ENCODE measurements at regions of chr2 and their contacts with region 1.

Region 1: DNA sequence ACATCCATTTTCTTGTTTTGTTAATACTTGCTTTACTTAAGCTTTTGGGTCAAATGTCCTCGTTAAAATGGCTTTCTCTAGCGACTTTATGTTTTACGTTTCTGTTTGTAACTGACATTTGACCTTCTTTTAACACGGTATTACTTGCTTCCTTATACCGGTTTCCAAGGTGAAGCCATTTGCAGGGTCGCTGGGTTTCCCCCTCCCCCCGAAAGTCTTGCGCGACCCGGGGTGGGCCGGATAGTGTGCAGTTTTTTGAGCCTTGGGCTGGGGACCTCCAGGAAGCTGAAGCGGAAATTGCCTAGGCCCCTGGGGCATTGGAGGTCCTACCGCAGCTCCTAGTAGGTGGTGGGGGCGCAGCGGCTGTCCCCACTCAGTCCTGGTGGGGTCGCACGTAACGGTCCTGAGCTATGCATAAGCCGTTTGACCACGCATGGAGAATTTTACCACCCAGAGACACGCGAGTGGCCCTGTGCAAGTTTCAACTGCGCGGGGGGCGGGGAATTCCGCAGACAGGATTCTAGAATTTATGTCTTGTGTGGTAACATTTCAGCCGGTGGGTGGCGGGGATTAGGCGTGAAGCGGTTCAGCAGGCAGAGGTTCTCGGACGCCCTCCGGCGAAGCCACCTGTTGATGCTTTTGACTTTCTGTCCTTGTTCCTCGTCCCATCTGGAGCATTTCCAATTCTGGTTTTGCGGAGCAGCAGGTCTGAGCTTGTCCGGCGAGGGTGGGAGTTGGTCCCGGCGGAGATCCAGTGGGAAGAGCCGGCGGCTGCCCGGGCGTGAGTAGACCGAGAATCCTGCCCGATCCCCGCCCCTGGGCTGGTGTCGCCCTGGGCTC is 2.4 kb downstream of the CFLAR start:
- DNase-seq: peak; percentile 93
- H3K4me3 ChIP-seq: peak overlapping the region; percentile 80 to 91 (median 85)
- H3K27ac ChIP-seq: peak overlapping the region; percentile 98 to 99 (median 98)
- H3K4me1 ChIP-seq: peaks cover 0 to 50% (median 29%) of the 10 kb centered on the region in 4 donors
- H3K27me3 ChIP-seq: no peaks in the 10 kb centered on the region
- CTCF ChIP-seq: peak; percentile 30 to 54 (median 47)
- EP300 ChIP-seq: no peak
- POLR2A ChIP-seq: peak in 1 of 2 donors; percentile 44

Region 2: DNA sequence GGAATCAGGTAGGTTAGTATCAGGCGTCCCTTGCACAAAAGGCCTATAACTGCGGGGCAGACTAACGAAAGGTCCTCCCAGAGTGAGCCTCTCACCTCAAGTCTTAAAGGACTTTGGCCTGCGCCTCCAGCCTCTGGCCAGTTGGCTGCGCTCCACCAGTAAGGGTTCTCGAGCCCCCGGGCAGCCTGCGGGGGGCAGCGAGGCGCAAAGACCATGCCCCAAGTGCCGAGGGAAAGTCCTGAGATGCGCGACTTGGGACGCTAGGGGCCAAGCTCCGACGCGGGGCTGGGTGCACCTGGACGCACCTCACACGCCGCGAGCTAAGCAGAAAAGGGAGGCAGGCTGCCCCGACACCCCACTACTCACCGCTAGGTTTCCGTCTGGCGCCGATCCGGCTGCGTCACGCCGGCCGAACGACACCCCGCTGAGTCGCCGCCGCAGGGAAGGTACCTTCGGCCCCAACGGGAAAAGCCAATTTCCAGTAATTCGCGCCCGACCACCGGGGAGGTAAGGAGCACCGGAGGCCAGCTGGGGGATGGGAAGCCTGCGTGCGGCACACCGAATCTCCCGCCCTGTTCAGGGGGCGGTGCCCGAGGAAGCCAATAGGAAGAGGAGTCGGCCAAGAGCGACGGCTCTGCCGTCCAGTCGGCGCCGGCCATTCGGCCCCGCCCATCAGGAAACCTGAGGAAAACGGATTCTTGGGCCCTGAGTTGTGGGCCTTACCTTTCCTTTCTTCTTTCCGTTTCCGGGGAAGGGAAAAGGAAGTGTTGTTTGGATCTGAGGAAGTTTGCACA is 155.0 kb before region 1 on chr2 and contains the start of gene ORC2:
- intact Hi-C with region 1: loop called (anchors 2 kb)
- DNase-seq: peak; percentile 97
- H3K4me3 ChIP-seq: peak within 1 kb of the TSS; percentile 71 to 98 (median 91)
- H3K27ac ChIP-seq: peak within 1 kb of the TSS; percentile 84 to 96 (median 90)
- H3K4me1 ChIP-seq: peaks cover 0 to 28% (median 16%) of the 10 kb centered on the region in 4 donors
- H3K27me3 ChIP-seq: no peaks in the 10 kb centered on the region
- CTCF ChIP-seq: peak; percentile 61 to 78 (median 70)
- EP300 ChIP-seq: no peak
- POLR2A ChIP-seq: no peak
- total RNA-seq, gene ORC2: 12.9 to 19.3 (median 15.7) TPM

Region 3: GRCh38 chr2:201158111-201158929 is 40.0 kb after region 1 on chr2:
- intact Hi-C with region 1: loop called (anchors 5 kb)
- DNase-seq: peak; percentile 75
- H3K4me3 ChIP-seq: no peak overlapping the region
- H3K27ac ChIP-seq: peak overlapping the region; percentile 35 to 60 (median 38)
- H3K4me1 ChIP-seq: peaks cover 0 to 20% (median 11%) of the 10 kb centered on the region in 4 donors
- H3K27me3 ChIP-seq: no peaks in the 10 kb centered on the region
- CTCF ChIP-seq: peak; percentile 16 to 70 (median 51)
- EP300 ChIP-seq: no peak
- POLR2A ChIP-seq: no peak